ENCODE measurements at regions of chr14 and their contacts with region 1.

Region 1: DNA sequence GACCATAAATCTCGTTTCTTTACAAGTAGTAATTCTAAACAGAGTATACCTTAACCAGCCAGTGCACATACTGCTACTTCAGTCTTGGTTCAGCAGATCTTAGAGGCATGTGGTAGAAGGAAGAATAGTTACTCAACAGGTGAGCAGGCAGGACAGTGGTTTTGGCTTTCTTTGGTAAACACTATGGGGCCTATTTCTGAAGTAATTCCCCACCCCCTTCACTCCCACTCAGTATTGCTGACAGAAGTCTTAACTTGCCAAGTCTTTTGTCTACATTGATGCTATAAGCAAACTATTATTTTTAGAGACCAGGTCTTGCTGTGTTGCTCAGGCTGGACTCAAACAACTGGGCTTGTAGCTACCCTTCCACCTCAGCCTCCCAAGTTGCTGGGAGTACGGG is 68.5 kb downstream of the FBXO34 start:
- DNase-seq: peak; percentile 71
- H3K4me3 Mint-ChIP-seq: peak overlapping the region; percentile 47
- H3K27ac Mint-ChIP-seq: peak overlapping the region; percentile 84
- H3K4me1 Mint-ChIP-seq: peaks cover 60% of the 10 kb centered on the region
- H3K27me3 Mint-ChIP-seq: no peaks in the 10 kb centered on the region

Region 2: DNA sequence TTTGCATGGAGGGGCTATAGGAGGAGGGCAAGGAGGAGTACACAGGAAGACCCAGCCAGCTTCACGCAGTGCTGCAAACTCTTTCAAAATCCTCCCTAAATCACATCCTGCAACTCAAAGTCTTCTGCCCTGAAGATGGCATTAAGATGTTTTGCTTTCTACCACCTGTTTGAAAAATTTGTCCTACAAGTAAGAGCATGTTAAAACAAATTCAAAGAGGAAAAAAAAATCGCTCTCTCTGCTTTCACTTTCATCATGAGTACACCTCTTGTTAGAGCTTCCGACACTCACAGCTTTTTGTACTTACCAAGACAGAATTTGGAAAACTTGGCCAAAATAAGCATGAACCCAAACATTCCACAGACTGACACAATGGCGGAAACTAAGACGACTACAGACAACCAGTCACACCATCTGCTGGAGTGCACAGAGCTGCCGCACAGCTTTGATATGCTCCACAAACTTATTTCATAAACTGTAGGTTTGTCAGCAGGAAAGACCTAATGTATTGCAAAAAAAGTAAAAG is 458.5 kb before region 1 on chr14:
- intact Hi-C with region 1: no loop called
- DNase-seq: peak; percentile 81
- H3K4me3 Mint-ChIP-seq: peak overlapping the region; percentile 83
- H3K27ac Mint-ChIP-seq: peak overlapping the region; percentile 90
- H3K4me1 Mint-ChIP-seq: peaks cover 43% of the 10 kb centered on the region
- H3K27me3 Mint-ChIP-seq: no peaks in the 10 kb centered on the region

Region 3: DNA sequence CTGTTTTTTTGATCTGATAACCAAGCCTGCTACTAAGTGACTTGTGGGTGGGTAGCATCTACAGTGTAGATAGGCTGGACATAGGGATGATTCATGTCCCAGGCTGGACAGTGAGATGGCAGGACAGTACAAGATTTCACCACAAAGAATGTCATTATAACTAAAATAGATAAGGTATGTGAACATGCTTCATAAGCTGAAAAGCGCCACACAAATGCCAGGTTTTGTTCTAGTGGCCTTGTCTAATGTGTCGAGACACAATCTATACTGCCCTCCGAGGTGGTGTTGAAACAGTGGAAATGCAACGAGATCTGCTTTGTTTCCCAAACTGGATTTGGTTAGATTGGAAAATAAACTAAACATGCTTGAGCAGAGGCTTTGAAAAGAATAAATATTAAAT is 206.4 kb before region 1 on chr14:
- intact Hi-C with region 1: no loop called
- DNase-seq: no peak
- H3K4me3 Mint-ChIP-seq: no peak overlapping the region
- H3K27ac Mint-ChIP-seq: no peak overlapping the region
- H3K4me1 Mint-ChIP-seq: peaks cover 17% of the 10 kb centered on the region
- H3K27me3 Mint-ChIP-seq: peaks cover 6% of the 10 kb centered on the region

Region 4: GRCh38 chr14:55327179-55327578 is 12.6 kb before region 1 on chr14:
- intact Hi-C with region 1: loop called (anchors 1 kb)
- DNase-seq: no peak
- H3K4me3 Mint-ChIP-seq: no peak overlapping the region
- H3K27ac Mint-ChIP-seq: peak overlapping the region; percentile 3
- H3K4me1 Mint-ChIP-seq: peaks cover 45% of the 10 kb centered on the region
- H3K27me3 Mint-ChIP-seq: no peaks in the 10 kb centered on the region

Region 5: GRCh38 chr14:55354500-55354899 is 14.7 kb after region 1 on chr14:
- intact Hi-C with region 1: loop called (anchors 1 kb)
- DNase-seq: peak; percentile 89
- H3K4me3 Mint-ChIP-seq: peak overlapping the region; percentile 70
- H3K27ac Mint-ChIP-seq: peak overlapping the region; percentile 93
- H3K4me1 Mint-ChIP-seq: peaks cover 33% of the 10 kb centered on the region
- H3K27me3 Mint-ChIP-seq: no peaks in the 10 kb centered on the region

Measured in activated CD4-positive, alpha-beta T cell treated with anti-CD3 and anti-CD28 coated beads, Interleukin-2, amount 10 ng/mL, durations not matched to agents 24 days and 14 days (primary cell).